Ascending aorta (tissue), 2 donors: ENCODE measurements at regions of chr15 and their contacts with region 1.

Region 1: DNA sequence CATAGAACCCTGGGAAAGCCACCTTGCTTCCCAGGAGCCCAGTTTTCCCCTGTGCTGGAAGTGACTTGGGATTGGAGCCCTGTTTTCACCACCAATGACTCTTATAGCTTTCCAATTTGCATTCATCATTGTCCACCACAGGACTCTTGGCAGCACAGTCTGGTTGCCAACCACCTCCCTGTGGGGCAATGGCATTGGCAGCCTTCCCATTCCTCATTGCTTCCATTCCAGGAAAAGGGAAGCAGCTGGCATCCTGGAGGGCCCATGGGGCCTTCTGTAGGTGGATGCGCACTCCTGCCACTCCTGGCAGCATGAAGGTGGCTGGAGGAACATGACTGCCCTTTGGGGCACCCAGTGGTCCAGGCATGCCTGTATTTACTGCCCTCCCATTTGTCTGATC is 57.7 kb downstream of the FEM1B start:
- DNase-seq: peak; percentile 53 to 94
- H3K4me3 ChIP-seq: no peak overlapping the region
- H3K27ac ChIP-seq: peak overlapping the region; percentile 96 to 98
- H3K4me1 ChIP-seq: peaks cover 29 to 59% of the 10 kb centered on the region in 2 donors
- H3K27me3 ChIP-seq: no peaks in the 10 kb centered on the region
- CTCF ChIP-seq: no peak

Region 2: GRCh38 chr15:68229386-68230156 is 105.7 kb before region 1 on chr15 and contains the start of gene CLN6:
- intact Hi-C with region 1: no loop called
- DNase-seq: peak; percentile 46 to 85
- H3K4me3 ChIP-seq: peak within 1 kb of the TSS; percentile 96
- H3K27ac ChIP-seq: peak within 1 kb of the TSS; percentile 57 to 67
- H3K4me1 ChIP-seq: peaks cover 0 to 13% of the 10 kb centered on the region in 2 donors
- H3K27me3 ChIP-seq: no peaks in the 10 kb centered on the region
- CTCF ChIP-seq: no peak
- total RNA-seq, gene CLN6: 6.4 TPM

Region 3: GRCh38 chr15:68352401-68353062 is 17.3 kb after region 1 on chr15:
- intact Hi-C with region 1: loop called (anchors 1 kb)
- DNase-seq: peak; percentile 81 to 96
- H3K4me3 ChIP-seq: no peak overlapping the region
- H3K27ac ChIP-seq: peak overlapping the region; percentile 96 to 98
- H3K4me1 ChIP-seq: peaks cover 18 to 62% of the 10 kb centered on the region in 2 donors
- H3K27me3 ChIP-seq: no peaks in the 10 kb centered on the region
- CTCF ChIP-seq: no peak

Region 4: DNA sequence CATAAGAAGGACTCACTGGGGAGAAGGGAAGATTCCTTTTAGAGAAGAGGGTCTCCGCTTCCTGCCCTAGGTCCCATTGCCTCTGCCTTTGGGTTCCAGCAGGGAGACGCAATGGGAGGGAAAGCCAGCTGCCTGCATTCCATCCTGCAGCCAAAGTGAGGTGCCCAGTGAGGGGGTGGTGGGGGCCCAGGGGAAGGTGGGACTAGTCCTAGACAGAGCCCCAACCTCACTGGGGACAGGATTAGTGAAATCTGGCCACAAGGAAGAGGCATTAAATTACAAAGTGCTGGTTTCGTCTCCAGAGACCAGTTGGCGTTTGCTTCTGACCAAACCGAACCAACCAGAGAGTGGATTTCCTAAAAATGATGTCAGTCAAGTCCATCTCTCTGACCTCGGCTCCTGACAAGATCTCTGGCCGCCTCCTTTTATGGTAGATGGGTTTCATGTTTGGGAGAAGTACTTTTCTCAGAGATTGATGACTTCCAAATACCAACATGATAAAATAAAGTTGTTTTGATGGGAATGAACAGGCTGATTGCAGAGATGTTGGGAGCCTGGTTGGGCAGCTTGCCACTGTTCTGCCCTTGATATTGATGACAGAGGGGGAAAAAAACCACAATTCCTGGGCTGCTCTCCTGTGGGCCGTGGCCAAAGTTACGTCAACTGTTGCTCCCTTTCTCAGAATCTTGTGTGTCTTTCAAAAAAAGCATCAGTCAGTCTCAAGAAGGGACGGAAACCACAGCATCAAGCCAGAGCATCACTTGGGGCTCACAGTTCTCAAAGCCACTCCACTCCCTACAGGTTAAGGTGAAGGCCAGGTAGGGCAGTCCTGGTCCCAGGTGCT is 72.0 kb after region 1 on chr15:
- intact Hi-C with region 1: no loop called
- DNase-seq: peak in 1 of 2 donors; percentile 78
- H3K4me3 ChIP-seq: no peak overlapping the region
- H3K27ac ChIP-seq: peak overlapping the region; percentile 78 to 84
- H3K4me1 ChIP-seq: peaks cover 10 to 33% of the 10 kb centered on the region in 2 donors
- H3K27me3 ChIP-seq: no peaks in the 10 kb centered on the region
- CTCF ChIP-seq: no peak

Region 5: GRCh38 chr15:68852461-68852860 is 517.2 kb after region 1 on chr15:
- intact Hi-C with region 1: no loop called
- DNase-seq: no peak
- H3K4me3 ChIP-seq: no peak overlapping the region
- H3K27ac ChIP-seq: no peak overlapping the region
- H3K4me1 ChIP-seq: no peaks in the 10 kb centered on the region
- H3K27me3 ChIP-seq: no peaks in the 10 kb centered on the region
- CTCF ChIP-seq: no peak